Natural killer cell (primary cell): ENCODE measurements at regions of chrX and their contacts with region 1.

Region 1: GRCh38 chrX:119753571-119754257 is 4.7 kb upstream of the SOWAHD start:
- DNase-seq: peak in 1 of 2 donors; percentile 88
- ATAC-seq: peak; percentile 52 to 69 (median 58)
- H3K4me3 ChIP-seq: no peak overlapping the region
- H3K4me3 Mint-ChIP-seq: peak overlapping the region; percentile 50
- H3K27ac ChIP-seq: peak overlapping the region; percentile 95
- H3K27ac Mint-ChIP-seq: peak overlapping the region; percentile 95
- H3K4me1 ChIP-seq: peaks cover 50% of the 10 kb centered on the region
- H3K4me1 Mint-ChIP-seq: peaks cover 34 to 36% of the 10 kb centered on the region in 2 donors
- H3K27me3 ChIP-seq: no peaks in the 10 kb centered on the region
- H3K27me3 Mint-ChIP-seq: no peaks in the 10 kb centered on the region
- CTCF ChIP-seq: peak; percentile 47

Region 2: DNA sequence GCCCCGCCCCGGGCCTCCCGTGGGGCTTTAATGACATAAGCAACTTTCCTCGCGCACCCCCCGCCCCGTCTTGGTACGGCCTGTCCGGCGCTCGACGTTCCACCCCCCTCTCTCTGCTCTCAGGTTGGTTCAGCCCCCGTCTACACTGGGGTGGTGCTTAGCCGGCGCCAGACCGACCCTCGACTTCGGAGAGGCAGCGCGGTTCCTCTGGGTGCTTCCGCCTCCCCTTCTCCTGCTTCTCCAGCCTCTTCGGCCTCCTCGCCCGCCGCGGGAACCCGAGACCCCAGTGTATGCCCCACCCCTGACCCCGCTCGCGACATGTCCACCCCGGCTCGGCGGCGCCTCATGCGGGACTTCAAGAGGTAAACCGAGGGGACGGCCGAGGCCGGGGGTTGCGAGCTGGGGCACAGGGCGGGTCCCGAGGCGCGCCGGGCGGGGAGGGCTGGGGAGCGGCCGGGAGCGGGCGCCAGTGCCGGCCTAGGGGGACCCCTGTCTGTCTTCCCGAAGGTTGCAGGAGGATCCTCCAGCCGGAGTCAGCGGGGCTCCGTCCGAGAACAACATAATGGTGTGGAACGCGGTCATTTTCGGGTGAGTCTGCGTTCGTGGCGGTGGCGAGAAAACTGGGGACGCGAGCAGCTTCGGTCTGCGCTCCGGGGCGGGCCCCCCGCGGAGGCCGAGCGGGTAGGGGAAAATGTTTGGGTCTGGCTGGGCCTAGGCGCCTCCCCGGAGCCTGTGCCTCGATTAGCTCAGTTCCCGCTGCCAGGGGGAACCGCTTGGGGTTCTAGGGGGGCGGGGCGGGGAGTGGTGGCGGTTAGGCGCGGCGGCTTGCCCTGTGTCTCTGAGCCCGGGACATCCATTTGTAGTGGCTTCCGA is 179.1 kb before region 1 on chrX and contains the start of gene UBE2A:
- intact Hi-C with region 1: loop called (anchors 10 kb)
- DNase-seq: peak; percentile 83 to 93
- ATAC-seq: peak; percentile 93 to 99 (median 93)
- H3K4me3 ChIP-seq: peak within 1 kb of the TSS; percentile 86
- H3K4me3 Mint-ChIP-seq: peak within 1 kb of the TSS; percentile 88
- H3K27ac ChIP-seq: peak within 1 kb of the TSS; percentile 84
- H3K27ac Mint-ChIP-seq: peak within 1 kb of the TSS; percentile 91 to 94
- H3K4me1 ChIP-seq: peaks cover 11% of the 10 kb centered on the region
- H3K4me1 Mint-ChIP-seq: peaks cover 0 to 14% of the 10 kb centered on the region in 2 donors
- H3K27me3 ChIP-seq: no peaks in the 10 kb centered on the region
- H3K27me3 Mint-ChIP-seq: peaks cover 0 to 7% of the 10 kb centered on the region in 2 donors
- CTCF ChIP-seq: no peak
- total RNA-seq, gene UBE2A: 88.4 to 125 (median 91.0) TPM

Region 3: GRCh38 chrX:119606280-119607015 is 147.3 kb before region 1 on chrX and contains the start of gene NKRF:
- intact Hi-C with region 1: loop called (anchors 10 kb)
- DNase-seq: peak; percentile 82 to 96
- ATAC-seq: peak; percentile 80 to 89 (median 83)
- H3K4me3 ChIP-seq: peak within 1 kb of the TSS; percentile 70
- H3K4me3 Mint-ChIP-seq: peak within 1 kb of the TSS; percentile 95
- H3K27ac ChIP-seq: peak within 1 kb of the TSS; percentile 98
- H3K27ac Mint-ChIP-seq: peak within 1 kb of the TSS; percentile 95 to 96
- H3K4me1 ChIP-seq: peaks cover 16% of the 10 kb centered on the region
- H3K4me1 Mint-ChIP-seq: peaks cover 21 to 25% of the 10 kb centered on the region in 2 donors
- H3K27me3 ChIP-seq: no peaks in the 10 kb centered on the region
- H3K27me3 Mint-ChIP-seq: no peaks in the 10 kb centered on the region
- CTCF ChIP-seq: no peak
- total RNA-seq, gene NKRF: 6.7 to 9.2 (median 6.9) TPM

Region 4: GRCh38 chrX:119685225-119686066 is 68.3 kb before region 1 on chrX:
- intact Hi-C with region 1: loop called (anchors 5 kb)
- DNase-seq: peak in 1 of 2 donors; percentile 75
- ATAC-seq: peak; percentile 32 to 73 (median 35)
- H3K4me3 ChIP-seq: peak overlapping the region; percentile 5
- H3K4me3 Mint-ChIP-seq: peak overlapping the region; percentile 82
- H3K27ac ChIP-seq: peak overlapping the region; percentile 100
- H3K27ac Mint-ChIP-seq: peak overlapping the region; percentile 96 to 98
- H3K4me1 ChIP-seq: peaks cover 94% of the 10 kb centered on the region
- H3K4me1 Mint-ChIP-seq: peaks cover 67 to 87% of the 10 kb centered on the region in 2 donors
- H3K27me3 ChIP-seq: no peaks in the 10 kb centered on the region
- H3K27me3 Mint-ChIP-seq: no peaks in the 10 kb centered on the region
- CTCF ChIP-seq: no peak

Region 5: DNA sequence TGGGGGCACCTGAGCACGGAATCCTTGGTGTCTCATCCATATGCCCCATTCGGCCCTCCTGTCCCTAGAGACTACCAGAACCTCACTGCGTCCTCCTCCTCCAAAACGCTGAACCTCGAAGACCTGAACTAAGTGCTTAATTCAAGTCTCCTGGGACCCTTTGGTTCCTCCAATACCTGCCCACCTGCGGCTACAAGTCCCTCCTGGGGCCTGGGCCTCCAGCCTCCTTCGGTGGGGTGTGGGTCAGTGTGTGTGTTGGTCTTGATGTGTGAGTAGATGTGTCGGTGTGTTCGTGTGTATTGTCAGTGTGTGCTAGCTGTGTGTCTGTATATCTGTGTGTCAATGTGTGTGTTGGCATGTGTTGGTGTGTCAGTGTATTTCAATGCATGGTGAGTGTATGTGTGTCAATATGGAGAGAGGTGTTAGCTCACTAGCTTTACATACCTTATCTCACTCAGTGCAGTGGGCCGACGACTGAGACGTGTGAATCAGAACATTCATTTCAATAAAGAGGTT is 58.1 kb before region 1 on chrX:
- intact Hi-C with region 1: no loop called
- DNase-seq: peak in 1 of 2 donors; percentile 3
- ATAC-seq: no peak
- H3K4me3 ChIP-seq: no peak overlapping the region
- H3K4me3 Mint-ChIP-seq: peak overlapping the region; percentile 14
- H3K27ac ChIP-seq: no peak overlapping the region
- H3K27ac Mint-ChIP-seq: no peak overlapping the region
- H3K4me1 ChIP-seq: peaks cover 23% of the 10 kb centered on the region
- H3K4me1 Mint-ChIP-seq: peaks cover 20 to 30% of the 10 kb centered on the region in 2 donors
- H3K27me3 ChIP-seq: no peaks in the 10 kb centered on the region
- H3K27me3 Mint-ChIP-seq: no peaks in the 10 kb centered on the region
- CTCF ChIP-seq: no peak

Region 6: GRCh38 chrX:119833905-119834304 is 80.2 kb after region 1 on chrX:
- intact Hi-C with region 1: no loop called
- DNase-seq: no peak
- ATAC-seq: no peak
- H3K4me3 ChIP-seq: no peak overlapping the region
- H3K4me3 Mint-ChIP-seq: no peak overlapping the region
- H3K27ac ChIP-seq: no peak overlapping the region
- H3K27ac Mint-ChIP-seq: no peak overlapping the region
- H3K4me1 ChIP-seq: no peaks in the 10 kb centered on the region
- H3K4me1 Mint-ChIP-seq: no peaks in the 10 kb centered on the region
- H3K27me3 ChIP-seq: no peaks in the 10 kb centered on the region
- H3K27me3 Mint-ChIP-seq: no peaks in the 10 kb centered on the region
- CTCF ChIP-seq: no peak